ENCODE measurements at regions of chr20 and their contacts with region 1.

Region 1: GRCh38 chr20:12171923-12172534 is 254.3 kb downstream of the BTBD3 start:
- DNase-seq: peak in 1 of 2 donors; percentile 23
- ATAC-seq: peak; percentile 51 to 95 (median 86)
- H3K4me3 ChIP-seq: no peak overlapping the region
- H3K27ac ChIP-seq: peak overlapping the region in 6 of 10 donors; percentile 27 to 72 (median 47)
- H3K4me1 ChIP-seq: peaks cover 0 to 28% (median 21%) of the 10 kb centered on the region in 9 donors
- H3K27me3 ChIP-seq: no peaks in the 10 kb centered on the region
- CTCF ChIP-seq: no peak

Region 2: GRCh38 chr20:10412591-10413408 is 1759.2 kb before region 1 on chr20:
- intact Hi-C with region 1: loop called in 1 of 10 experiments (anchors 5 kb)
- DNase-seq: no peak
- ATAC-seq: no peak
- H3K4me3 ChIP-seq: no peak overlapping the region
- H3K27ac ChIP-seq: no peak overlapping the region
- H3K4me1 ChIP-seq: peaks cover 0 to 24% (median 18%) of the 10 kb centered on the region in 9 donors
- H3K27me3 ChIP-seq: no peaks in the 10 kb centered on the region
- CTCF ChIP-seq: no peak

Region 3: GRCh38 chr20:11917663-11918062 is 254.4 kb before region 1 on chr20 and contains the start of gene BTBD3:
- intact Hi-C with region 1: loop called in 4 of 10 experiments (anchors 10 kb)
- DNase-seq: peak; percentile 37 to 83
- ATAC-seq: peak; percentile 94 to 97 (median 96)
- H3K4me3 ChIP-seq: peak within 1 kb of the TSS; percentile 4 to 62 (median 45)
- H3K27ac ChIP-seq: peak within 1 kb of the TSS; percentile 39 to 88 (median 62)
- H3K4me1 ChIP-seq: peaks cover 4 to 88% (median 68%) of the 10 kb centered on the region in 9 donors
- H3K27me3 ChIP-seq: no peaks in the 10 kb centered on the region
- CTCF ChIP-seq: peak in 6 of 9 donors; percentile 10 to 51 (median 24)
- total RNA-seq, gene BTBD3: 21.4 to 29.8 (median 23.8) TPM

Measured in heart right ventricle (tissue), 16 donors.